MCF 10A (cell line): ENCODE measurements at regions of chr2 and their contacts with region 1.

Region 1: DNA sequence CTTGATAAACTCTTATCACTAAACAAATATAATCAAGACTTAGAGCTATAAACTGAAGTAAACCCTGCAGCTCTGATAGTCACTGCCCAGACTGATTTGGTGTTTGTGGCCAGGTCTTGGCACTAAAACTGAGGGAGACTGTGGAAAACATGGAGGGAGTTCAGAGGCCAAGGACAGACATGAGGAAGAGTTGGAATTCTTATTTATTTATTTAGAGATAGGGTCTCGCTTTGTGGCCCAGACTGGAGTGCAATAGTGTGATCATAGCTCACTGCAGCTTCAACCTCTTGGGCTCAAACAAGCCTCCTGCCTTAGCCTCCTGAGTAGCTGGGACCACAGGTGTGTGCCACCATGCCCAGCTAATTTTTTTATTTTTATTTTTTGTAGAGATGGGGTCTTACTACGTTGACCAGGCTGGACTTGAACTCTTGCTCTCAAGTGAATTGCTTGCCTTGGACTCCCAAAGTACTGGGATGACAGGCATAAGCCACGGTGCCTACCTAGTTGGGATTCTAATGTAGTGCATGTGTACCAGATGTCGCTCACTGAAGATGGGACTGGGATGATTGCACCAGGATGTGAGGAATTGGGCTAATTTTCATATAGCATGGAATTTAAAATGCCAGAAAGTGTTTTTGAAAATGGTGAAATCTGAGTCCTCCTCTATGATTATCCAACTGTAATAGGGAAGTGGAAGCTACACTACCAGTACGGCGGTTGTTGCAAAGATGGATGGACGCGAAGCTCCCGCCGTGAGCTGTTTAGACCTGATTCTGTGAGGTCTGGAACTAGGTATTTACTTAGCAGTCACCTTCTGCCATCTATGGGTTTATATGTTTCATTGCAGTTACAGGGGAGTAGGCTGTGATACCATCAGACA is 52.7 kb upstream of the CTLA4 start:
- DNase-seq: peak; percentile 79
- H3K4me3 Mint-ChIP-seq: no peak overlapping the region
- H3K27ac Mint-ChIP-seq: no peak overlapping the region
- H3K4me1 Mint-ChIP-seq: peaks cover 14% of the 10 kb centered on the region
- H3K27me3 Mint-ChIP-seq: no peaks in the 10 kb centered on the region
- CTCF ChIP-seq: peak; percentile 76

Region 2: GRCh38 chr2:202831242-202832220 is 983.4 kb before region 1 on chr2:
- CTCF ChIA-PET with region 1: no interaction called
- POLR2A ChIA-PET with region 1: no interaction called
- intact Hi-C with region 1: loop called (anchors 1 kb)
- DNase-seq: peak; percentile 84
- H3K4me3 Mint-ChIP-seq: no peak overlapping the region
- H3K27ac Mint-ChIP-seq: no peak overlapping the region
- H3K4me1 Mint-ChIP-seq: peaks cover 8% of the 10 kb centered on the region
- H3K27me3 Mint-ChIP-seq: no peaks in the 10 kb centered on the region
- CTCF ChIP-seq: peak; percentile 46

Region 3: DNA sequence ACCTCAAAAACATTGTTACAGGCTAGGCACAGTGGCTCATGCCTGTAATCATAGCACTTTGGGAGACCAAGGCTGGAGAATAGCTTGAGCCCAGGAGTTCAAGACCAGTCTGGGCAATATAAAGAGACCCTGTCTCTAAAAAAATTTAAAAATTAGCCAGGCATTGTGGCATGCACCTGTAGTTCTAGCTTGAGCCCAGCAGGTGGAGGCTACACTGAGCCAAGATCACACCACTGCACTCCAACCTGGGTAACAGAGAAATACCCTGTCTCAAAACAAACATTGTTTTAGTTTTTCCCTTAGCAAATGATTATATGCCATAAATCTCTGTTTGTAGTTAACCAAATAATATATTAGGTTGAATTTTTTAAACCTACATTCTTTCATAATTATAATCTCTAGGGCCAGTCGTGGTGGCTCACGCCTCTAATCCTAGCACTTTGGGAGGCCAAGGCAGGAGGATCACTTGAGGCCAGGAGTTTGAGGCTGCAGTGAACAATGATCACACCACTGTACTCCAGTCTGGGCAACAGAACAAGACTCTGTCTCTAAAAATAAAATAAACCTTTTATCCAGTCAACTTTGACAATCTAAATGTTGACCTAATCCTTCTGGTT is 589.4 kb before region 1 on chr2:
- CTCF ChIA-PET with region 1: interaction called, 17 read pairs
- POLR2A ChIA-PET with region 1: no interaction called
- intact Hi-C with region 1: loop called (anchors 1 kb)
- DNase-seq: peak; percentile 41
- H3K4me3 Mint-ChIP-seq: no peak overlapping the region
- H3K27ac Mint-ChIP-seq: no peak overlapping the region
- H3K4me1 Mint-ChIP-seq: no peaks in the 10 kb centered on the region
- H3K27me3 Mint-ChIP-seq: no peaks in the 10 kb centered on the region
- CTCF ChIP-seq: peak; percentile 83

Region 4: GRCh38 chr2:203469554-203469953 is 345.3 kb before region 1 on chr2:
- CTCF ChIA-PET with region 1: interaction called, 12 read pairs
- POLR2A ChIA-PET with region 1: no interaction called
- intact Hi-C with region 1: no loop called
- DNase-seq: no peak
- H3K4me3 Mint-ChIP-seq: no peak overlapping the region
- H3K27ac Mint-ChIP-seq: no peak overlapping the region
- H3K4me1 Mint-ChIP-seq: no peaks in the 10 kb centered on the region
- H3K27me3 Mint-ChIP-seq: no peaks in the 10 kb centered on the region
- CTCF ChIP-seq: no peak

Region 5: GRCh38 chr2:203535078-203535783 is 279.7 kb before region 1 on chr2 and contains the start of gene RAPH1:
- CTCF ChIA-PET with region 1: interaction called, 5 read pairs
- POLR2A ChIA-PET with region 1: interaction called, 5 read pairs
- intact Hi-C with region 1: loop called (anchors 2 kb)
- DNase-seq: peak; percentile 84
- H3K4me3 Mint-ChIP-seq: peak within 1 kb of the TSS; percentile 77
- H3K27ac Mint-ChIP-seq: peak within 1 kb of the TSS; percentile 93
- H3K4me1 Mint-ChIP-seq: peaks cover 17% of the 10 kb centered on the region
- H3K27me3 Mint-ChIP-seq: no peaks in the 10 kb centered on the region
- CTCF ChIP-seq: no peak
- total RNA-seq, gene RAPH1: 78.0 and 79.8 TPM in 2 replicates

Region 6: DNA sequence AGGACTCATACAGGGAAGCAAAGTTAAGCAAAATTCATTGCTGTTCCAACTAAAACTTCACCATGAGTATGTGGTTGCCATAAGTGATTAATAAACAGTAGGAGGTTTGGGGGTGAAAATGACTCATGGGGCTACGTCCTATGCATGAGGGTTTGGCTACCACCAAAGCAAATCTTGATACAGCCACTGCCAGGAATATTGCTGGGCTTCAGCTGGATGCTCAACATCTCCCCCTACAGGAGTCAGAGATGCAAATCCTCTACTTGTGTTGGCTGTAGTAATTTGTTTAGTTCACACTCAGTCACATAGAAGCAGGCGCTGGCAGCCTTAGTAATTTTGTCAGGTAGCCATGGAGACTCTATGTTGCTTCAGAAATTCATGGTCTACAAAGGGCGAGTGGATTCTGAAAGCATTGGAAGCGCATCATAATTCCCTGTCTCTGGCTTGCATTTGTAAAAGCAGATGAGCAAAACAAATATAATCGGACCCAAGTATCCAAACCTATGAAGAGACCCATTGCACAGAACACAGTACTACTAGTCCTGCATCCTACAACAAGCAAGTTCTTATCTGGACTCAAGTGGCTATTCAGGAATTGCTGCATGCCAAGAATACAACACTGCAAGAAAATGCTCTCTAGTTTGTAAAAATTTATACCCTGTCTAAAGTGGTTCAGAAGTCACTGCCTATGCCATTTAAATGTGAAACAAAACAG is 32.5 kb before region 1 on chr2:
- CTCF ChIA-PET with region 1: interaction called, 10 read pairs
- POLR2A ChIA-PET with region 1: no interaction called
- intact Hi-C with region 1: no loop called
- DNase-seq: peak; percentile 95
- H3K4me3 Mint-ChIP-seq: no peak overlapping the region
- H3K27ac Mint-ChIP-seq: peak overlapping the region; percentile 87
- H3K4me1 Mint-ChIP-seq: peaks cover 9% of the 10 kb centered on the region
- H3K27me3 Mint-ChIP-seq: no peaks in the 10 kb centered on the region
- CTCF ChIP-seq: peak; percentile 85

Region 7: GRCh38 chr2:203909261-203909967 is 94.5 kb after region 1 on chr2:
- CTCF ChIA-PET with region 1: interaction called, 17 read pairs
- POLR2A ChIA-PET with region 1: interaction called, 3 read pairs
- intact Hi-C with region 1: loop called (anchors 1 kb)
- DNase-seq: peak; percentile 59
- H3K4me3 Mint-ChIP-seq: no peak overlapping the region
- H3K27ac Mint-ChIP-seq: no peak overlapping the region
- H3K4me1 Mint-ChIP-seq: no peaks in the 10 kb centered on the region
- H3K27me3 Mint-ChIP-seq: peaks cover 12% of the 10 kb centered on the region
- CTCF ChIP-seq: peak; percentile 70